Activated CD4-positive, alpha-beta T cell treated with anti-CD3 and anti-CD28 coated beads, Interleukin-2, amount 10 ng/mL, durations not matched to agents 24 days and 14 days (primary cell): ENCODE measurements at regions of chr7 and their contacts with region 1.

Region 1: DNA sequence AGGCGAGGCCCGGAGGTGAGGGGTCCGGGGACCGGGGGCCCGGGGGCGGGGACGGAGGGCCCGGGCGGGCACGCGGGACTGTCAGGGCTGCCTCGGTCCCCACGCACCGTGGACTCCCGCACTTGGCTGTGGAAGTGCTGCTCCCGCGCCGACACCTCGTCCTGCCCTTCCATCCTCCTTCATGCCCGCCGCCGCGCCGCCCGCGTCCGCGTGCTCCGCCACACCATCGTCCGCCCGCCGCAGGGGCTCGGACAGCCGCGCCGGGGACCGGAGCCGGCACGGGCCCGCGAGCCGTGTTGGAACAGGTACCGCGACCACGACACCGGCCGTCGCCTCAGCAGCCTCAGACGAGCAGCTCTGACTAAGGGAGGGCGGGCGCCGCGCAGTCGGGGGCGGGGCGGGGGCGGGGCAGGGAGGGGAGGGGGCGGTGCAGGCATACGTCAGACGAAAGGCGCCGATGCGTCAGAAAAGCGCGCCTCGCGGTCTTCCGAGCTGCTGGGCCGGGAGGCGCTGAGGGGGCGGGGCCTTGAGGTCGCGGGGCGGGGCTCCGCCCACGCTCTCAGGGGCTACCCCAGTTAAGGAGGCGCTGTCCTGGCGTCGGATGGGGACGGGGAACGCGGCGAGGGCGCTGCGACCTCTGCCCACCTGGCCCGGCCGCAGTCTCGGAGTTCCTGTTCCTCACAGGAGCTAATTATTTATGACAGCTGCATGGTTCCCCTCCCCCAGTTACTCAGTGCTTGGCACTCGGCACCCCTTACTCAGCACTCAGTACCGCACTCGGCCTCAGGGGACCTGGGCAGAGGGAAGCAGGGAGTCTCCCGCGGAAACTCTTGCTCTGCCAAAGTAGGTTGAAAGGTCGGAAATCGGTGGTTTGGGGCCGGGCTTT is at the start of gene LMBR1:
- DNase-seq: peak; percentile 97
- H3K4me3 Mint-ChIP-seq: peak within 1 kb of the TSS; percentile 94
- H3K27ac Mint-ChIP-seq: peak within 1 kb of the TSS; percentile 94
- H3K4me1 Mint-ChIP-seq: peaks cover 36% of the 10 kb centered on the region
- H3K27me3 Mint-ChIP-seq: no peaks in the 10 kb centered on the region
- total RNA-seq, gene LMBR1: 57.0 and 63.6 TPM in 2 replicates

Region 2: DNA sequence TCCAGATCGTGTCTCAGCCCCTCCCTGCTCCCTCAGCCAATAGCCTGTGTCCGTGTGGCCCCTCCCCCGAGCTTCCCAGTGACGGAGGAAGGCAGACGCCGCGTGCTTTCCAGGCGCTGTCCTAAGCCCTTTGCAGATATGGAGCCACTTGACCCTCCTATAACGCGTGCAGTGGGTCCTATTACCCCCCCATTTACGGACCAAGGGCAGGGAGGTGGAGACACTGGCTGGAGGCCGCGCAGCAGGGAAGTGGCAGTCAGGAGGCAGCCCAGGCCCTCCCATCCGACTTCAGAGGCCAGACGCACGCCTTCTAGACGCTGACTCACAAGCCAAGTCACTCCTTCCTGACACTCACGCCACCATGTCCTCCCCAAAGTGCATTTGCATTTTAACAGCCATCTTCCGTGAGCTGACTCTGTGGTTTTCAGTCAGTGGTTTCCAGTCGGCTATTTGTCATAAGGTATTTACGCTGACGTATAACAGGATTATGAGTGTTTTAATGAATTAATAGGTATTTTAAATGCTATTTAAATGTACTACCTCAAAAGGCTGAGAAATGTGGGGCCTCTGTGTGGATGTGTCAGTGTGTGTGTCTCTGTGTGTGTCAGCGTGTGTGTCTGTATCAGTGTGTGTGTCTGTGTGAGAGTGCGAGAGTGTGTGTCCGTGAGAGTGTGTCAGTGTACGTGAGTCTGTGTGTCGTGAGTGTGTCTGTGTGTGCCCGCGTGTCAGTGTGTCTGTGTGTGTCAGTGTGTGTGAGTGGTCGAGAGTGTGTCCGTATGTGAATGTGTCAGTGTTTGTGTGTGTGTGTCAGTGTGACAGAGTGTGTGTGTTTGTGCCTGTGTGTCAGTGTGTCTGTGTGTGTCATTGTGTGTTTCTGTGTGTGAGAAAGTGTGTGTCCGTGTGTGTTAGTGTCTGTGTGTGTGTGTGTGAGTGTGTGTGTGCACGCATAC is 1687.4 kb before region 1 on chr7:
- intact Hi-C with region 1: loop called (anchors 1 kb)
- DNase-seq: peak; percentile 96
- H3K4me3 Mint-ChIP-seq: peak overlapping the region; percentile 85
- H3K27ac Mint-ChIP-seq: peak overlapping the region; percentile 96
- H3K4me1 Mint-ChIP-seq: peaks cover 34% of the 10 kb centered on the region
- H3K27me3 Mint-ChIP-seq: no peaks in the 10 kb centered on the region

Region 3: DNA sequence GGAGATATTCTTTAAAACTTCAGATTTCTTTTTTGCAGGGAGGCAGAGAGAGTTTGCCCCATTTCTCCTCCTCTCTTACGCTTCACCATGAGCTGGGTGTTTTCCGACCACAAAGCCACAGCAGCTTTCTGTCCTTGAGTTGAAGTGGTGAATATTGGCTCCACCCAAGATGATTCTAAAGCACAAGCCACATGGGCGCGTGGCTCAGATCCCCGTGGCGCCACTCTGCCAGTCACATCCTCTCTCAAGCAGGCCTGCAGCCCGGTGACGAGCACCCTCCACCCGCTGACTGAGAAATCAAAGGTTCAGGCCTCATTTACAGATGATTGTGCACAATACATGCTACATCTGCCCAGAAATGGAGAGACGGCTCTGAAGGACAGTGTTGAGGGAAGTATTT is 280.1 kb before region 1 on chr7:
- intact Hi-C with region 1: loop called (anchors 1 kb)
- DNase-seq: peak; percentile 95
- H3K4me3 Mint-ChIP-seq: peak overlapping the region; percentile 70
- H3K27ac Mint-ChIP-seq: peak overlapping the region; percentile 68
- H3K4me1 Mint-ChIP-seq: peaks cover 43% of the 10 kb centered on the region
- H3K27me3 Mint-ChIP-seq: peaks cover 67% of the 10 kb centered on the region

Region 4: DNA sequence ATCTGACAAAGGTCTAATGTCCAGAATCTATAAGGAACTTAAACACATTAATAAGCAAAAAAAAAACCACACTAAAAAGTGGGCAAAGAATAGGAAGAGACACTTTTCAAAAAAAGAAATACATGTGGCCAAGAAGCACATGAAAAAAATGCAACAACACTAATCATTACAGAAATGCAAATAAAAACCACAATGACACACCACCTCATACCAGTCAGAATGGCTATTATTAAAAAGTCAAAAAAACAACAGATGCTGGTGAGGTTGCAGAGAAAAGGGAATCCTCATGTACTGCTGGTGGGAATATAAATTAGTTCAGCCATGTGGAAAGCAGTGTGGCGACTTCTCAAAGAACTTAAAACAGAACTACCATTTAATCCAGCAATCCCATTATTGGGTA is 119.1 kb before region 1 on chr7:
- intact Hi-C with region 1: loop called (anchors 1 kb)
- DNase-seq: no peak
- H3K4me3 Mint-ChIP-seq: no peak overlapping the region
- H3K27ac Mint-ChIP-seq: peak overlapping the region; percentile 20
- H3K4me1 Mint-ChIP-seq: peaks cover 36% of the 10 kb centered on the region
- H3K27me3 Mint-ChIP-seq: no peaks in the 10 kb centered on the region

Region 5: GRCh38 chr7:156949541-156950380 is 56.7 kb after region 1 on chr7 and contains the start of gene NOM1:
- intact Hi-C with region 1: loop called (anchors 1 kb)
- DNase-seq: peak; percentile 98
- H3K4me3 Mint-ChIP-seq: peak within 1 kb of the TSS; percentile 100
- H3K27ac Mint-ChIP-seq: peak within 1 kb of the TSS; percentile 96
- H3K4me1 Mint-ChIP-seq: peaks cover 28% of the 10 kb centered on the region
- H3K27me3 Mint-ChIP-seq: peaks cover 16% of the 10 kb centered on the region
- total RNA-seq, gene NOM1: 50.5 and 54.5 TPM in 2 replicates

Region 6: GRCh38 chr7:157224627-157225026 is 331.6 kb after region 1 on chr7:
- intact Hi-C with region 1: no loop called
- DNase-seq: no peak
- H3K4me3 Mint-ChIP-seq: no peak overlapping the region
- H3K27ac Mint-ChIP-seq: no peak overlapping the region
- H3K4me1 Mint-ChIP-seq: no peaks in the 10 kb centered on the region
- H3K27me3 Mint-ChIP-seq: no peaks in the 10 kb centered on the region

Region 7: GRCh38 chr7:157336383-157337315 is 443.6 kb after region 1 on chr7 and contains the start of gene DNAJB6:
- intact Hi-C with region 1: loop called (anchors 2 kb)
- DNase-seq: peak; percentile 99
- H3K4me3 Mint-ChIP-seq: peak within 1 kb of the TSS; percentile 97
- H3K27ac Mint-ChIP-seq: peak within 1 kb of the TSS; percentile 99
- H3K4me1 Mint-ChIP-seq: peaks cover 25% of the 10 kb centered on the region
- H3K27me3 Mint-ChIP-seq: peaks cover 18% of the 10 kb centered on the region
- total RNA-seq, gene DNAJB6: 125 and 128 TPM in 2 replicates

Region 8: GRCh38 chr7:158085741-158086695 is 1193.0 kb after region 1 on chr7:
- intact Hi-C with region 1: no loop called
- DNase-seq: no peak
- H3K4me3 Mint-ChIP-seq: no peak overlapping the region
- H3K27ac Mint-ChIP-seq: no peak overlapping the region
- H3K4me1 Mint-ChIP-seq: no peaks in the 10 kb centered on the region
- H3K27me3 Mint-ChIP-seq: no peaks in the 10 kb centered on the region